Calu3 (cell line): ENCODE measurements at regions of chr2 and their contacts with region 1.

Region 1: GRCh38 chr2:36701391-36701795 is 4.9 kb downstream of the VIT start:
- DNase-seq: no peak
- H3K4me3 Mint-ChIP-seq: no peak overlapping the region
- H3K27ac Mint-ChIP-seq: no peak overlapping the region
- H3K4me1 Mint-ChIP-seq: peaks cover 20% of the 10 kb centered on the region
- H3K27me3 Mint-ChIP-seq: no peaks in the 10 kb centered on the region
- CTCF ChIP-seq: no peak

Region 2: DNA sequence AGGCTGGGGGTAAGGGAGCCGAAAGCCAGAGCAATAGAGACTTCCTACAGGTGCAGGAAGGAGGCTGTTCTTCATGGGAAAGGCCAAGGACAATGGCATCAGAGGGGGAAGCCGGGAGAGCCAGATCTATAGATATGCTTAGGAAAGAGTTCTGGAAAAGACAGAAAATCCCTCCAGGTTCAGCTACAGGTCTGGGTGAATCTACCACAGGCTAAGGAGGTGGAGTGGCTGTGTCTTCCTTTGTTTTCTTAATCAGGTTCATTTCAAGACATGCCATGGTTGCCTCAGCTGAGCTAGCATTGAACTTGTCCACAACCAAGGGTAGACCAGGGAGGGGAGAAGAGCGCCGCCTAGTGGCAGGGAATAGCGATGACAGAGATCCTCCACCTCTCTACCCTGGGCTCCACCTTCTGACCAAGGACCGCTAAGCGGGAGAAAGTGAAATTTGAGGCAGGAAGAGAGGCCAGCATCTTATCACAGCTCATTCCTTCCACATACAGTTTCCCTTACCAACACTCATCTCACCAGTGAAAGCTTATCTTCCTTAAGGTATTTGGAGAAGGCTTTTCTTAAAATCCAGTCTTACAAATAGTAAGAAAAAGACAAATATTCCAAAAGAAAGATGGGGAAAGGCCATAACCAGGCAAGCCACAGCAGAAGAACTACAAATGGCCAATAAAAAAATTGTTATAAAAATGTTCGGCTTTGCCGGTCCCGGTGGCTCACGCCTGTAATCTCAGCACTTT is 69.3 kb after region 1 on chr2:
- CTCF ChIA-PET with region 1: no interaction called
- intact Hi-C with region 1: loop called (anchors 2 kb)
- DNase-seq: peak; percentile 43
- H3K4me3 Mint-ChIP-seq: no peak overlapping the region
- H3K27ac Mint-ChIP-seq: no peak overlapping the region
- H3K4me1 Mint-ChIP-seq: no peaks in the 10 kb centered on the region
- H3K27me3 Mint-ChIP-seq: no peaks in the 10 kb centered on the region
- CTCF ChIP-seq: peak; percentile 67